H1 (cell line): ENCODE measurements at regions of chr19 and their contacts with region 1.

Region 1: GRCh38 chr19:13060964-13061927 is 41.4 kb downstream of the LYL1 start:
- DNase-seq: peak in 1 of 2 experiments; percentile 97
- H3K4me3 ChIP-seq: peak overlapping the region; percentile 17 to 60 (median 46); a peak in 7 of 8 replicates
- H3K27ac ChIP-seq: no peak overlapping the region
- H3K4me1 ChIP-seq: peaks cover 0 to 14% (median 9%) of the 10 kb centered on the region in 4 experiments; a peak in 6 of 7 replicates
- H3K27me3 ChIP-seq: peaks cover 56 to 76% (median 72%) of the 10 kb centered on the region in 4 experiments
- CTCF ChIP-seq: peak; percentile 95 to 98 (median 95)
- EP300 ChIP-seq: peak in 1 of 2 experiments; percentile 46; a peak in 1 of 3 replicates
- POLR2A ChIP-seq: no peak
- RAD21 ChIP-seq: peak; percentile 82 to 91

Region 2: DNA sequence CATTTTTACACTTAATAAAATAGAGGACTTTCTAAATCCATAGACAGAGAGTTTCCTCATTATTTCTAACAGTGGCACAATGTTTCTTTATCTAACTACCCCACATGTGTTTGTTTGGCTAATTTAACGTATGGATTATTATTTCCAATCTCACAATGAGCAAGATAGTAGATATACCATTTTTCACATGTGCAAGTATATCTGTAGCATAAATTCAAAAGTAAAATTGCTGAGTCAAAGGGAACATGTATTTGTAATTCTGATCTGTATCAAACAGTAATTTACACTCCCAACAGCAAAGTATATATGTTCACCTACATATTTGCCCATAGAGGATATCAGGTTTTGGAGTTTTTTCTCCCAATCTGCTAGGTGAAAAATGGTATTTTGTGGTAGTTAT is 204.6 kb before region 1 on chr19:
- CTCF ChIA-PET with region 1: no interaction called
- POLR2A ChIA-PET with region 1: no interaction called
- DNase-seq: no peak
- H3K4me3 ChIP-seq: no peak overlapping the region
- H3K27ac ChIP-seq: no peak overlapping the region
- H3K4me1 ChIP-seq: no peaks in the 10 kb centered on the region
- H3K27me3 ChIP-seq: no peaks in the 10 kb centered on the region
- CTCF ChIP-seq: no peak
- EP300 ChIP-seq: no peak
- POLR2A ChIP-seq: no peak
- RAD21 ChIP-seq: no peak

Region 3: DNA sequence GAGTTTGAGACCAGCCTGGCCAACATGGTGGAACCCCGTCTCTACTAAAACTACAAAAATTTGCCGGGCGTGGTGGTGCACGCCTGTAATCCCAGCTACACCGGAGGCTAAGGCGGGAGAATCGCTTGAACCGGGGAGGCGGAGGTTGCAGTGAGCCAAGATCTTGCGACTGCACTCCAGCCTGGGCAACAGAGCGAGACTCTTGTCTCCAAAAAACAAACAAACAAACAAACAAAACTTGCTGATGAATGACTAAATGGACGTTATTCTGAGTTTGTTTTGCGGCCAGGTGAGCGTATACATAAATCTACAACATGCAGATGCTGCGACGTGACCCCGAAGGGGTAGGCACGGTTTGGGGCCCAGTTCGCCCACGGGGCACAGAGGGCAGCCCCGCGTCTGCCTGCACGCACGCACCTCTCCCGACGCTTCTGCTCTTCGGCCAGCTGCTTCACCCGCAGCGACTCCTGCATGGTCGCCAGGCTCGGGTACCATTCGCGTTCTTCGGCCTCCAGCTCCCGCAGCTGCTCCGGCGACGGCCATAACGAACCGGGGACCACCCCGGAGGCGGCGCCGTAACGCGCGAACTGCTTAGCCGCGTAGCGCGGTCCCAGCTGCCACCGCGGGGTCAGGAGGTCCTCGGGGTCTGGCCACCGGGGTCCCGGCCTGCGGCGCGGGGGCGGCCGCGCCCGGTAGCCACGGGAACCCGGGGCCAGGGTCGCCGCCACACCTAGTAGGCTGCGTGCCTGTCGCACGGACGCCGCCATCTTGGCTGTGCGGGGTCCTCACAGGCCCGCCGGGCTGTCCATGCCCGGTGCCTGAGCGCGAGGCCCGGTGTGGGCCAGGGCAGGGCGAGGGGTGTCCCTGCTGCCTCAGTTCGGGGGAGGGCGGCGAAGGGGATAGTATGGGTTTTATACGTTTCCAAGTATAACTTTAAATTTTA is 104.5 kb before region 1 on chr19 and contains the start of gene GADD45GIP1:
- CTCF ChIA-PET with region 1: no interaction called
- POLR2A ChIA-PET with region 1: no interaction called
- DNase-seq: peak; percentile 38 to 89
- H3K4me3 ChIP-seq: peak within 1 kb of the TSS; percentile 82 to 91 (median 88)
- H3K27ac ChIP-seq: peak within 1 kb of the TSS; percentile 94
- H3K4me1 ChIP-seq: peaks cover 0 to 4% (median 2%) of the 10 kb centered on the region in 4 experiments; a peak in 3 of 7 replicates
- H3K27me3 ChIP-seq: no peaks in the 10 kb centered on the region
- CTCF ChIP-seq: no peak
- EP300 ChIP-seq: no peak
- POLR2A ChIP-seq: peak; percentile 96 to 97
- RAD21 ChIP-seq: no peak
- total RNA-seq, gene GADD45GIP1: 42.2 and 45.5 TPM in 2 replicates

Region 4: DNA sequence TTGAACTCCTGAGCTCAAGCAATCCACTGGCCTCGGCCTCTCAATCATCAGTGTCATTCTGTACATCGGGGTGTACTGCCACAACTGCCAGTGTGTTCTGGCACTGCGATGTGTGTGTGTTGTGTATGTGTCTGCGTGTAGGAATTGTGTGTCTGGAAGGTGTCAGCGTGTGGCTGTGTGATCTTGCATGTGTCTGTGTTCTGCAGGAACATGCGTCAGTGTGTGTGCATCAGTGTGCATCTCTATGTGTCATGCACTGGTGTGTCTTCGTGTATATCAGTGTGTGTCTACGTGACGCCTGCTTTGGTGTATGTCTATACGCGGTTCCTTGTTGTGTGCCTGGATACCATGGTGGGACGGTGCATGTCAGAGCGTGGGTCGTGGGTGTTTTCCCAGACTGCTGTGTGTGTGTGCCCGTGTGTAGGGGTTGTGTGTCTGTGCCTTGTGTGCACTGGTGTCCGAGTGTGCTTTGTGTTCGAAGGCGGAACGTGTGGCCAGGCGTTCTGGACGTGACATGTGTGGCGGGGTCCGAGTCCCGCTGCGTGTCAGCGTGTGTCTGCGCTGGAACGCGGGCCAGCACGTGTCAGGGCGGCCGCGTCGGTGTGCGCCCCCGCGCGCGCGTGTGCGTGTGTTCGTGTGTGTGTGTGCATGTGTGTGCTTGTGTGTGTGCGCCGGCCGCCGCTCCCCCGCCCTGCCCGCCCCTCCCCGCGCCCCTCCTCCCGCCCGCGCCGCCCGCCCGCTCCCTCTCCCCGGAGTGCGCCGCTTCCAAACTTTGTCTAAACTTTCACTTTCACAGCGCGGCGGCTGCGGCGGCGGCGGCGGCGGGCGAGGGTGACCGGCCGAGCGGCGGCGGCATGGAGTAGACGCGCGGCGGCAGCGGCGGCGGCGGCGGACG is 66.3 kb before region 1 on chr19 and contains the start of gene NFIX:
- CTCF ChIA-PET with region 1: interaction called, 23 read pairs
- POLR2A ChIA-PET with region 1: no interaction called
- DNase-seq: no peak
- H3K4me3 ChIP-seq: peak within 1 kb of the TSS; percentile 21 to 50 (median 30); a peak in 7 of 8 replicates
- H3K27ac ChIP-seq: no peak within 1 kb of the TSS
- H3K4me1 ChIP-seq: peaks cover 0 to 12% (median 8%) of the 10 kb centered on the region in 4 experiments; a peak in 5 of 7 replicates
- H3K27me3 ChIP-seq: peaks cover 53 to 89% (median 82%) of the 10 kb centered on the region in 4 experiments
- CTCF ChIP-seq: no peak
- EP300 ChIP-seq: no peak
- POLR2A ChIP-seq: no peak
- RAD21 ChIP-seq: no peak
- total RNA-seq, gene NFIX: 0.20 and 0.27 TPM in 2 replicates

Region 5: DNA sequence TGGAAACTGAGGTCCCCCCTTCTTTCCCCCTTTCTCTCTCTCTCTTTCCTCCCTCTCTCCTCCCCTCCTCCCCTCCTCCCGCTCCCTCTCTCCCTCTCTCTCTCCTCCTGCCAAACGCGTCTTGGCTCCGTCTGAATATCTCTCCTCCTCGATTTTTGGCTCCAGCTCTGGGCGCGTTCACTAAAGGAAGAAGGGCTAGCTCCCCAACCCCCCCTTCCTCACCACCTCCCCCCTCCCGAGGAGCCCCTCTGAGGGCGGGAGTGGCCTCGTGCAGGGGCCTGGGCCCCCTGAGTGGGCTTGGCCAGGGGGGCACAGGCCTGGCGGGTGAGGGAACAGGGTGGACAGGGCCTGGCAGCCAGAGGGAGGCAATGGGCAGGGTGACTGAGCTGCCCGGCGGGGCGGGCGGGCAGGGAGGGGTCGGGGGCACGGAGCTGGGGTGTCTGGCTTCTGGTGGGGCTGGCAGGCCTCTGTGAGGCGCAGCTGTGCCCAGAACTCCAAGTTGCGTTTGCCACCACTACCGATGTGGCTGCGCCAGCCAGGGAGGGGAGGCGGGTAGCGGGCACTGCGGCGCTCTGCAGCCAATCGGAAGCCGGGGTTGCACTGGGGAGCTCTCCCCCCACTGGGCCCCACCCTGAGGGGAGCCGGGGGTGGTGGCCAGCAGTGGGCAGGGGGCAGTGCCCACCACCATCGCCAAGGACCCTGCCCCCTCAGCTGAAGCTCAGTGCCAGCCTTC is 58.9 kb before region 1 on chr19:
- CTCF ChIA-PET with region 1: interaction called, 140 read pairs
- POLR2A ChIA-PET with region 1: no interaction called
- DNase-seq: no peak
- H3K4me3 ChIP-seq: no peak overlapping the region
- H3K27ac ChIP-seq: no peak overlapping the region
- H3K4me1 ChIP-seq: peaks cover 0 to 6% (median 0%) of the 10 kb centered on the region in 4 experiments; a peak in 1 of 7 replicates
- H3K27me3 ChIP-seq: peaks cover 16 to 94% (median 74%) of the 10 kb centered on the region in 4 experiments
- CTCF ChIP-seq: no peak
- EP300 ChIP-seq: no peak
- POLR2A ChIP-seq: no peak
- RAD21 ChIP-seq: no peak